ENCODE measurements at regions of chr7 and their contacts with region 1.

Region 1: DNA sequence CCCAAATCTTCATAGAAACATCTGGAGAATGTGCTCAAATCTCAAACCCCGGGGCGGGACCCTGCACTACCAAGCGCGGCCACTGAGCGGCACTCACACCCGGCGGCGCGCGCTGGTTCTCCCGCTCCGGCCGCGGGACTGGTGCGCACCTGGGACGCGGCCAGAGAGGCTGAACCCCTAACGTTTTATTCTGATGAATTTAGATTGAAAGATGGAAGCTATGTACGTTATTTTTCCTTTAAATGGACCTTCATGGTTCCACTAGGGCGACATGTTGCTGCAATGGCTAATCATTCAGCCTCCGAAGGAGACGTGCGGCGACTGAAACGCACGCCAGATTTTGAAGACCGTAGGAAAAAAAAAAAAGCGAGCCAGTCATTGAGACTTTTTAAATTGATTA is 107.0 kb upstream of the INSIG1 start:
- DNase-seq: peak in 1 of 2 donors; percentile 75
- H3K4me3 ChIP-seq: no peak overlapping the region
- H3K27ac ChIP-seq: no peak overlapping the region
- H3K4me1 ChIP-seq: no peaks in the 10 kb centered on the region
- H3K27me3 ChIP-seq: no peaks in the 10 kb centered on the region
- CTCF ChIP-seq: peak; percentile 74 to 91 (median 86)

Region 2: DNA sequence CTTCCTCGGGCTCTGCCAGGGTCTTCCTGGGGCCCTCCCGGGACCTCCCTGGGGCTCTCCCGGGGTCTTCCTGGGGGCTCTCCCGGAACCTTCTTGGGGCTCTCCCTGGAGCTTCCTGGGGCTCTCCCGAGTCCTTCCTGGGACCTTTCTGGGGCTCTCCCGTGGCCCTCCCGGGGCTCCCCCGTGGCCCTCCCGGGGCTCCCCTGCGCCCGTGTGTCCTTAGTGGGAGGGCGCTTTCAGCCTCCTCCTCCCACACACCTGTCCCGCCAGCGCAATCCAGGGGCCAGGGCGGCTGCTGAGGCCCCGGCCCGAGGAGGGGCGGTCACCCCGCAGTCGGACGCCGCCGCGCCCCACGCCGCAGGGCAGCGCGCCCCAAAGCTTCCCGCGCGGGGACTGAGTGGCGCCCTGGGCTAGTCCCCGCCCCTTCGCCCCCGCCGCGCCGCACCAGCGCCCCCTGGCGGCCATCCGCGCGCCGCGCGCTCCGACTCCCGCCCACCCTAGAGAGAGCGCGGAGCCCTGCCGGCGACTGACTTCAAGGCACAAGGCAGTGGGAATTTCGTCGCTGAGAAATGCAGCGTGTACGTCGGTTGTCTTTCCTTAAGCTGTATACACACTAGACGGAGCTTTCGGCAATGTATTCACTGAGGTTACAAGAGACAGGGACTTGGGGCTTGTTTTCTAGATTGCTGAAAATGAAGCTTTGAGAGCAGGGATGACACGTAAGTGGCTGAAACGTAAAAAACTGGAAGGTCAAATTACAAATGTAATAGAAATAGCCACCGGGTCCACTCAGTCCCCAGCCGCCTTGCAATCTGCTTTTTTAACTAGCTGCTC is 154.1 kb after region 1 on chr7:
- intact Hi-C with region 1: loop called (anchors 1 kb)
- DNase-seq: peak in 1 of 2 donors; percentile 87
- H3K4me3 ChIP-seq: peak overlapping the region; percentile 27 to 60
- H3K27ac ChIP-seq: no peak overlapping the region
- H3K4me1 ChIP-seq: peaks cover 0 to 4% of the 10 kb centered on the region in 2 donors
- H3K27me3 ChIP-seq: no peaks in the 10 kb centered on the region
- CTCF ChIP-seq: peak; percentile 52 to 93 (median 81)

Measured in ascending aorta (tissue), 2 donors.